ENCODE measurements at regions of chr12 and their contacts with region 1.

Region 1: GRCh38 chr12:106919910-106920544 is 35.7 kb upstream of the TMEM263 start:
- DNase-seq: no peak
- CTCF ChIP-seq: peak; percentile 71

Region 2: GRCh38 chr12:106386813-106387535 is 533.1 kb before region 1 on chr12:
- CTCF ChIA-PET with region 1: interaction called, 10 read pairs
- POLR2A ChIA-PET with region 1: no interaction called
- DNase-seq: no peak
- CTCF ChIP-seq: no peak

Region 3: DNA sequence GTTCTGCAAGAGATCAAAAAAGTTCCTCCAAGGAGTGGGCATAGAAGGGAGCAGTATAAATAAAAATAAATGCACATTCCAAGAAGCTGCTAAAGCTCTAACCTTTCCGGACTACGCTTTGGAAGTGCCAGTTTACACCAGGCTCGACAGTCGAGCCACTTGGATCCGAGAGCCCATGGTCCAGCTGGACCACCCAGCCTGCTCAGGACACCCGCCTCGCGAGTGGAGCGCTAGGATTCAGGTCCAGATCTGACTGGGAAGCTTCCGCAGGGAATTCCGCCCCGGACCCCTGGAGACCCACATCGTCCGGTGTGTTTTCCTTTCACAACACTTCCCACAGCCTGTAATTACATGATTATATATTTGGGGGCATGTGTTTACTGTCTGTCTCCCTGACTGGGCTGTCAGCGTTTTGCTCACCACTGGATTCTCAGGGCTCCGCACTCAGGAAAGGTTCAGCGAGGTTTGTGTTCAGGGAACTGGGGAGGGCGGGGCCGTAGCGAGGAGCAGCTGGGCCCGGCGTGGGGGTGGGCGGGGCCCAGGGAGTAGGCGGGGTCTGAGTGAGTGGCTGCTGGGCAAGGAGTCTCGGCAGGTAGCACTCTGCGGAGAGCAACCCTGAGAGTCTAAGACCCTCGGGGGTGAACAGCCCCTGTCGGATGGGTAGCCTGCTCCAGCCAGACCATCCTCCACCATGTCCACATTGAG is 16.6 kb before region 1 on chr12:
- CTCF ChIA-PET with region 1: interaction called, 12 read pairs
- POLR2A ChIA-PET with region 1: no interaction called
- DNase-seq: peak; percentile 81
- CTCF ChIP-seq: no peak

Measured in GM10248 (cell line).